ENCODE measurements at regions of chr2 and their contacts with region 1.

Region 1: GRCh38 chr2:171416009-171416926 is 17.5 kb downstream of the METTL8 start:
- DNase-seq: peak; percentile 78
- ATAC-seq: peak; percentile 100
- H3K4me3 ChIP-seq: no peak overlapping the region
- H3K27ac ChIP-seq: no peak overlapping the region
- H3K4me1 ChIP-seq: no peaks in the 10 kb centered on the region; a peak in 1 of 4 replicates
- H3K27me3 ChIP-seq: no peaks in the 10 kb centered on the region
- CTCF ChIP-seq: peak; percentile 73 to 89 (median 89); a peak in 5 of 6 replicates
- POLR2A ChIP-seq: no peak
- RAD21 ChIP-seq: peak; percentile 94

Region 2: GRCh38 chr2:169955940-169956339 is 1460.3 kb before region 1 on chr2:
- CTCF ChIA-PET with region 1: no interaction called
- POLR2A ChIA-PET with region 1: no interaction called
- RAD21 ChIA-PET with region 1: no interaction called
- intact Hi-C with region 1: no loop called
- DNase-seq: no peak
- ATAC-seq: no peak
- H3K4me3 ChIP-seq: no peak overlapping the region
- H3K27ac ChIP-seq: no peak overlapping the region
- H3K4me1 ChIP-seq: no peaks in the 10 kb centered on the region
- H3K27me3 ChIP-seq: no peaks in the 10 kb centered on the region
- CTCF ChIP-seq: no peak
- POLR2A ChIP-seq: no peak
- RAD21 ChIP-seq: no peak

Region 3: DNA sequence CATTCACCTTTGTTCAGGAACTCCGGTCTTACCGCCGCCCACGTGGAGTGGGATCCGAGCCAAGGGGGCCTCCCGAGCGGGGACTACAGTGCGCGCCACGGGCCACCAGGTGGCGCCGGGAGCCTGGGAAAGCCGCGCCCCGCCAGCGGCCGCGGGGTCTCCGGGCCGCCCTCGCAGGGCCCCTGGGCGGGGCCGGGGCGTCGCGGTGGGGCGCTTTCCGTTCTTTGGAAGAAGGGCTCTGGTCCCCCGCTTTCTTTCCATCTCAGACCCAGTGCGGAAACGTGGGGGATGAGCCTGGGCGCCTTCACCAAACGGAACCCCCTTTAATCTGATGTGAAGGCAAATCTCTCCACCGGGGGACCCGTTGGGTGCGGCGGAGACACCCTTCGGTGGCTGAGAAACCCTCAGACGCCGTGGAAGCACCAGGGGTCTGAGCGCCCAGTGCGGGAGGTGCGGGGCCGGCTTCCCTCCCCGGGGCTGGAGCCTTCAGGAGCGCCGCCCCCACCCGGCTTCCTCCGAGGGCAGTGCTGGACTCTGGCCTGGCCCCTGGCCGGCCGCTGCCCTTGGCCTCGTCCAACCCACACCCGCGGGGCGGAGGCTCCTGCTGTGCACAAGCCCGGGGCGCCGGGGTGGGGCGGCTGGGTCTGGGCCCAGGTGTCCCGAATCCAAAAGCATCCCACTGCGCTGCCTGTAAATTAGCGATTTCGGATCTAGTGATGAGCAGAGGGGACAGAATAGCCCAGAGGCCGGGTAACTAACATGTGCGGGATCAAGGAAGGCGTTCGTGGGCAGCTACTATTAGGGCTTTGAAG is 442.6 kb before region 1 on chr2:
- CTCF ChIA-PET with region 1: interaction called, 30 read pairs
- POLR2A ChIA-PET with region 1: interaction called, 3 read pairs
- RAD21 ChIA-PET with region 1: interaction called in 1 of 2 experiments, 3 read pairs
- intact Hi-C with region 1: loop called (anchors 1 kb)
- DNase-seq: peak; percentile 62
- ATAC-seq: peak; percentile 91
- H3K4me3 ChIP-seq: peak overlapping the region; percentile 50 to 62
- H3K27ac ChIP-seq: peak overlapping the region; percentile 50; the same call in 1 of the 2 replicates
- H3K4me1 ChIP-seq: peaks cover 12 to 19% of the 10 kb centered on the region in 2 experiments; a peak in 3 of 4 replicates
- H3K27me3 ChIP-seq: no peaks in the 10 kb centered on the region
- CTCF ChIP-seq: peak; percentile 76 to 92 (median 82)
- POLR2A ChIP-seq: no peak
- RAD21 ChIP-seq: peak; percentile 89

Region 4: DNA sequence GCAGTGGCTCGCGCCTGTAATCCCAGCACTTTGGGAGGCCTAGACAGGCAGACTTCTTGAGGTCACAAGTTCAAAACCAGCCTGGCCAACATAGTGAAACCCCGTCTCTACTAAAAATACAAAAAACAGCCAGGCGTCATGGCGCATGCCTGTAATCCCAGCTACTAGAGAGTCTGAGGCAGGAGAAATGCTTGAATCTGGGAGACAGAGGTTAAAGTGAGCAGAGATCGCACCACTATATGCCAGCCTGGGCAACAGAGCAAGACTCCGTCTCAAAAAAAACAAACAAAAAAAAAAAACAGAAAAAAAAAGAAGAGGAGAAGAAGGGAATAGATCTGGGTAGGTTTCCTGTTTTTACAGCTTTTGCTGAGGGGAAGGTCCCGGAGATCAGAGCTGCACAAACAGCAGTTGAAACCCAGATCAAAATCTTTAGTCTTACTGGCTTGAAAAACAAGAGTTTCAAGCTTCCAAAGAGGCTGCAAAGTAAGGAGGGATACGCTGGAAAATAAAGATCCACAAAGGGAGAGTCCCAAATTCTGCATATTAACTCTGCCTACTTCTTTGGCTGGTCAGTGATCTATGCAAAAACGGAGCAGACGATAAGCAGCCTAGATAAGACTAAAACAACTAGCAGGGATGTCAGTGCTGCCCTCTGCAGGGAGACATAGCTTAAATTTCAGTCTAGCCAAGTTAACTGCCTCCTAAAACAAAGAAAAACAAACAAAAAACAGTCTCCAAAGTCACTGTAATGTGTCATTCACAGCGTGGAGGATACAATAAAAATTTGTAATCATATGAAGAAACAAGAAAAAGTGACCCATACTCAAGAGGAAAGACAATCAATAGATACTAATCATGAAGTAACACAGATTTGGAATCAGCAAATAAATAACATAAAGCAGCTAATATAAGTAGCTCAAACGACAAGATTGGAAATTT is 329.6 kb before region 1 on chr2:
- CTCF ChIA-PET with region 1: interaction called, 10 read pairs
- POLR2A ChIA-PET with region 1: no interaction called
- RAD21 ChIA-PET with region 1: no interaction called
- intact Hi-C with region 1: no loop called
- DNase-seq: peak; percentile 19
- ATAC-seq: peak; percentile 86
- H3K4me3 ChIP-seq: no peak overlapping the region
- H3K27ac ChIP-seq: no peak overlapping the region
- H3K4me1 ChIP-seq: no peaks in the 10 kb centered on the region
- H3K27me3 ChIP-seq: no peaks in the 10 kb centered on the region
- CTCF ChIP-seq: peak; percentile 28 to 77 (median 72); a peak in 5 of 6 replicates
- POLR2A ChIP-seq: no peak
- RAD21 ChIP-seq: peak; percentile 41; the same call in 1 of the 2 replicates

Region 5: GRCh38 chr2:171160119-171160955 is 255.9 kb before region 1 on chr2 and contains the start of gene TLK1:
- CTCF ChIA-PET with region 1: interaction called, 6 read pairs
- POLR2A ChIA-PET with region 1: no interaction called
- RAD21 ChIA-PET with region 1: no interaction called
- intact Hi-C with region 1: loop called (anchors 2 kb)
- DNase-seq: peak; percentile 21
- ATAC-seq: peak; percentile 77
- H3K4me3 ChIP-seq: peak within 1 kb of the TSS; percentile 87 to 94
- H3K27ac ChIP-seq: peak within 1 kb of the TSS; percentile 94
- H3K4me1 ChIP-seq: peaks cover 4 to 19% of the 10 kb centered on the region in 2 experiments; a peak in 3 of 4 replicates
- H3K27me3 ChIP-seq: no peaks in the 10 kb centered on the region
- CTCF ChIP-seq: no peak
- POLR2A ChIP-seq: peak; percentile 20
- RAD21 ChIP-seq: no peak
- total RNA-seq, gene TLK1: 57.7 TPM

Region 6: GRCh38 chr2:171433763-171434670 is 17.7 kb after region 1 on chr2 and contains the starts of genes DCAF17 and METTL8:
- CTCF ChIA-PET with region 1: interaction called, 14 read pairs
- POLR2A ChIA-PET with region 1: interaction called, 6 read pairs
- RAD21 ChIA-PET with region 1: no interaction called
- intact Hi-C with region 1: no loop called
- DNase-seq: peak; percentile 87
- ATAC-seq: peak; percentile 93
- H3K4me3 ChIP-seq: peak within 1 kb of the TSS; percentile 69 to 90
- H3K27ac ChIP-seq: peak within 1 kb of the TSS; percentile 94
- H3K4me1 ChIP-seq: peaks cover 9 to 45% of the 10 kb centered on the region in 2 experiments; a peak in 3 of 4 replicates
- H3K27me3 ChIP-seq: no peaks in the 10 kb centered on the region
- CTCF ChIP-seq: peak; percentile 25 to 42 (median 38); a peak in 4 of 6 replicates
- POLR2A ChIP-seq: peak; percentile 61
- RAD21 ChIP-seq: no peak
- total RNA-seq, gene DCAF17: 17.7 TPM
- total RNA-seq, gene METTL8: 34.4 TPM